ENCODE measurements at regions of chr6 and their contacts with region 1.

Region 1: GRCh38 chr6:155424181-155424580 is 31.5 kb downstream of the NOX3 start:
- DNase-seq: no peak
- ATAC-seq: no peak
- H3K4me3 Mint-ChIP-seq: no peak overlapping the region
- H3K27ac Mint-ChIP-seq: no peak overlapping the region
- H3K4me1 Mint-ChIP-seq: peaks cover 23% of the 10 kb centered on the region
- H3K27me3 Mint-ChIP-seq: no peaks in the 10 kb centered on the region
- CTCF ChIP-seq: no peak

Region 2: DNA sequence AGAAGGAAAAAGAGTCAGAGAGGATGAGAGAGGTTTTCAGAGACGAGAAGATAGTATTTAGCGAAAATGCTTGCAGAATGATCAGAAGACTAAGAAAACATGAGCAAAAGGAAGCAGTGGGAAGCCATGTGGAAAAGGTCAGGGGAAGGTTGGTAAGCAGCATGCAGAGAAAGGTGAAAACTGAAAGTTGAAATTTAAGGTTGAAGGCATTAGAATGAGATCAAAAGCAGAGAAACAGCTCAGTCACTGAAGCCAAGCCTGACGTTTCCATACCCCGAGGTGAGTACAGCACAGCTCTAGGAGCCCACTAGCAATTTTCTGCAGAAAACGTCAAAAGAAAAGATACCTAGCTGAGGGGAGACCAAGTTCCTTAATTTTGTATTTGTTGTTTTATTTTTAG is 90.8 kb before region 1 on chr6:
- CTCF ChIA-PET with region 1: no interaction called
- POLR2A ChIA-PET with region 1: no interaction called
- intact Hi-C with region 1: loop called (anchors 5 kb)
- DNase-seq: peak; percentile 52
- ATAC-seq: peak; percentile 84
- H3K4me3 Mint-ChIP-seq: peak overlapping the region; percentile 10
- H3K27ac Mint-ChIP-seq: peak overlapping the region; percentile 84
- H3K4me1 Mint-ChIP-seq: peaks cover 41% of the 10 kb centered on the region
- H3K27me3 Mint-ChIP-seq: no peaks in the 10 kb centered on the region
- CTCF ChIP-seq: no peak

Measured in activated CD8-positive, alpha-beta T cell treated with anti-CD3 and anti-CD28 coated beads for 36 hours (primary cell).